ENCODE measurements at regions of chr5 and their contacts with region 1.

Region 1: GRCh38 chr5:74766849-74767578 is at the starts of genes GFM2 and NSA2:
- DNase-seq: peak; percentile 92 to 98 (median 96)
- H3K4me3 ChIP-seq: peak within 1 kb of the TSS; percentile 65 to 100 (median 96)
- H3K27ac ChIP-seq: peak within 1 kb of the TSS in 58 of 59 donors; percentile 6 to 93 (median 82)
- H3K27me3 ChIP-seq: no peaks in the 10 kb centered on the region
- CTCF ChIP-seq: peak in 25 of 56 donors; percentile 5 to 54 (median 23)
- total RNA-seq, gene GFM2: 22.4 to 57.2 (median 38.5) TPM
- total RNA-seq, gene NSA2: 15.8 to 63.6 (median 30.8) TPM

Region 2: DNA sequence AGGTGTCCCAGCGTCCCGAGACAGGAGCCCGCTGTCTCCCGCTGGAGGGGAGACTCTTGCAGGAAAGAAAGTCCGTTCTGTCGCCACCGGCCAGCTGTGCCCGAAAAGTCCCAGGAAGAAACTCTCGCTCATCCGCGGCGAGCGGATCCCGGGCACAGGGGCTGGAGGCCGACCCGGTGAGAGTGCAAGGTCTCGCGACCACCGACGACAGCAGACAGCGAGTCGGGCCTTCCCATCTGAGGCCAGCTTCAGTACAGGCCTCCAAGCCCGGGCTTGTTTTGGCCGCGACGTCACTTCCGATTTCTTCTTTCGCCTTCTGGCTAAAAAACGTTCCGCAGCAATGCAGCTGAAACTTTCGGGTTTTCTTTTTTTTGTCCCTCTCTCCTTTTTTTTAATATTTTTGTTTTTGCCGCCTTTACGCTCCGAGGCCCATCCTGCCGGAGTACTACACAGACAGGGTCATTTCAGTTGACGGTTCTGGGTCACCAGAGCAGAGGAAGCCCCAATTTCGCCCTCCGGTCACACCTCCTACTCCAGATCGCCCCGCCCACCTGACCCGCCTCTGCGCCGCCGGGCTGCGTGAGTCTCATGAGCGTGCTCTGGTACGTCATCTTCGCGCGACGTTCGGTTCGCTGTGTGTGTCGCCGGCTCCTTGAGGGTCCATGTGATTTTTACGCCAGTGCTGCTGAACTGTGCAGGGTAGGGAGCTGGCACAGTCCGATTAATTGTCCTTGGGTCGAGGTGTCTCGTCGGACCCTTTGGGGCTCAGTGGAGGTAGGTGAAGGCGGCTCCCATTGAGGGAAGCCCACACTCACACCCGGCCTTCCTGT is 1201.7 kb before region 1 on chr5 and contains the starts of genes ANKRA2 and UTP15:
- intact Hi-C with region 1: loop called in 1 of 2 experiments (anchors 10 kb)
- DNase-seq: peak; percentile 97 to 99 (median 98)
- H3K4me3 ChIP-seq: peak within 1 kb of the TSS; percentile 63 to 99 (median 92)
- H3K27ac ChIP-seq: peak within 1 kb of the TSS; percentile 48 to 98 (median 90)
- H3K27me3 ChIP-seq: no peaks in the 10 kb centered on the region
- CTCF ChIP-seq: peak in 26 of 56 donors; percentile 2 to 62 (median 28)
- total RNA-seq, gene ANKRA2: 11.5 to 36.8 (median 22.4) TPM
- total RNA-seq, gene UTP15: 11.8 to 28.0 (median 18.2) TPM

Region 3: GRCh38 chr5:74673011-74673790 is 93.8 kb before region 1 on chr5:
- intact Hi-C with region 1: loop called in 1 of 2 experiments (anchors 5 kb)
- DNase-seq: peak in 7 of 10 donors; percentile 42 to 79 (median 59)
- H3K4me3 ChIP-seq: peak overlapping the region in 58 of 59 donors; percentile 1 to 68 (median 50)
- H3K27ac ChIP-seq: peak overlapping the region in 55 of 59 donors; percentile 2 to 92 (median 81)
- H3K27me3 ChIP-seq: no peaks in the 10 kb centered on the region
- CTCF ChIP-seq: peak; percentile 44 to 89 (median 73)

Region 4: DNA sequence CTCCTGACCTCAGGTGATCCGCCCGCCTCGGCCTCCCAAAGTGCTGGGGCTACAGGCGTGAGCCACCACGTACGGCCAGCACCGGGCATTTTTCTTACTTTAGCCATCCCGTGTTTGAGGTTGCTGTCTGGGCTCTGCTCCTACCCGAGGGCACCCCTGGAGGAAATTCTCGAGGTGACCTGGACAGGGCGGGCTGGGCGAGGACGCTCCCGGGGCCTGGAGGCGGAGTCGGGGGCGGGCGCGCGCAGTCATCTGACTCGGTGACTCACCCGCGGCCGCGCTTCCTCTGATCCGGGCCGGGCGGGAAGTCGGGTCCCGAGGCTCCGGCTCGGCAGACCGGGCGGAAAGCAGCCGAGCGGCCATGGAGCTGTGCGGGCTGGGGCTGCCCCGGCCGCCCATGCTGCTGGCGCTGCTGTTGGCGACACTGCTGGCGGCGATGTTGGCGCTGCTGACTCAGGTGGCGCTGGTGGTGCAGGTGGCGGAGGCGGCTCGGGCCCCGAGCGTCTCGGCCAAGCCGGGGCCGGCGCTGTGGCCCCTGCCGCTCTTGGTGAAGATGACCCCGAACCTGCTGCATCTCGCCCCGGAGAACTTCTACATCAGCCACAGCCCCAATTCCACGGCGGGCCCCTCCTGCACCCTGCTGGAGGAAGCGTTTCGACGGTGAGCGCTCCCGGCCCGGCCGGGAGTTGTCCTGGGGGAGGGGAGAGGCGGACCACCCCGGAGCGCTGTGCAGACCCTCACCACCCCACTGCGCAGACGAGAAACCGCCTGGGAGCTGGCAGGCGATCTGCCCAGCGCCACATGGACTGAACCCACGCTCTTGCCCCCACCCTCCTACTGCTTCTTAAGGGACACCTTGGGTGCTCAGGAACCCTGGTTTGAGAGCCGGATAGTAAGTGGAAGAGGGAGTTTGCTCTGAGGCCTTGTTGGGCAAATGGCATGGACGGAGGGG is 81.8 kb before region 1 on chr5 and contains the start of gene HEXB:
- intact Hi-C with region 1: loop called (anchors 5 kb)
- DNase-seq: peak; percentile 72 to 93 (median 84)
- H3K4me3 ChIP-seq: peak within 1 kb of the TSS; percentile 64 to 98 (median 88)
- H3K27ac ChIP-seq: peak within 1 kb of the TSS; percentile 9 to 97 (median 86)
- H3K27me3 ChIP-seq: no peaks in the 10 kb centered on the region
- CTCF ChIP-seq: peak in 24 of 56 donors; percentile 4 to 47 (median 22)
- total RNA-seq, gene HEXB: 30.9 to 75.5 (median 53.2) TPM

Region 5: DNA sequence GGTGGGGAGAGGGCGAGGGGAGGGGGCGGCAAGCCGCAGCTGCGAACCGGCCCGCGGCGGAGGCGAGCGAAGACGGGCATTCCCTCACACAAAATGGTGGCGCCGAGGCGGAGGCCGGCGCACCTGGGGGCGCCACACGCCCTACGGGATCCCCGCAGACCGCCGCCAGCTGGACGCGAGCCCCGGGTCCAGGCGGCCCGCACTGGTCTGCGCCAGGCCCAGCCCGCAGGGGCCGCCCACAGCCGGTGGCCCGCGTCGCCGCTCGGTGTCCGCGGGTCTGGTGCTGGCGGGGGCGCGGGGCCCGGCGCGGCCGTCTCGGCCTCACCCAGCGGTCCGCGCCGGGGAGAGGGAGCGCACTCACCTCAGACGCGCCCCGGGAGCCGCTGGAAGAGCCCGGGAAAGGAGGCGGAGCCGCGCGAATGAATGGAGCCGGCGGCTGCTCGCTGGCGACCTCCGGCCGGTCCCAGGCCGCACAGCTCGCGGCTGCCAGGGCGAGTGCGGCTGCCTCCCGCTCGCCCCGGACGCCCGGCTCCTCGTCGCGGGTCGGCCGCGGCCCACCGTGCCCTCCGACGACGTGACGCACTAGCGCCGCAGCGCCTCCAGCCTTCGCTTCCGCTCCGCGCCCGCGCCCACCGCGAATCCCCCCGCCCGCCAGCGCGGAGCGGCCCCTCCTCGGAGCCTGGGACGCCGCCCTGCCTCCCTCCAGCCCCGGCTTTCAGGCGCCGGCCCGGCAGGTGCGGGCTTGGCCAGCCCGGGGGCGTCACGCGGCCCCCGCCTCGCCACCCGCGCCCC is 99.0 kb after region 1 on chr5 and contains the start of gene FAM169A:
- intact Hi-C with region 1: loop called in 1 of 2 experiments (anchors 2 kb)
- DNase-seq: peak in 5 of 10 donors; percentile 48 to 71 (median 57)
- H3K4me3 ChIP-seq: peak within 1 kb of the TSS; percentile 56 to 92 (median 80)
- H3K27ac ChIP-seq: peak within 1 kb of the TSS; percentile 43 to 96 (median 89)
- H3K27me3 ChIP-seq: no peaks in the 10 kb centered on the region
- CTCF ChIP-seq: peak in 15 of 56 donors; percentile 3 to 43 (median 12)
- total RNA-seq, gene FAM169A: 46.6 to 90.8 (median 70.1) TPM

Region 6: GRCh38 chr5:74919487-74919886 is 152.5 kb after region 1 on chr5:
- intact Hi-C with region 1: loop called (anchors 2 kb)
- DNase-seq: no peak
- H3K4me3 ChIP-seq: peak overlapping the region in 3 of 59 donors; percentile 1 to 23 (median 19)
- H3K27ac ChIP-seq: no peak overlapping the region
- H3K27me3 ChIP-seq: no peaks in the 10 kb centered on the region
- CTCF ChIP-seq: peak; percentile 55 to 89 (median 73)